CD4-positive, alpha-beta memory T cell (primary cell): ENCODE measurements at regions of chr3 and their contacts with region 1.

Region 1: GRCh38 chr3:57755668-57756527 is at the start of gene SLMAP:
- DNase-seq: peak; percentile 94 to 98 (median 95)
- H3K4me3 ChIP-seq: peak within 1 kb of the TSS; percentile 40 to 81
- H3K4me3 Mint-ChIP-seq: peak within 1 kb of the TSS; percentile 96 to 99 (median 98)
- H3K27ac ChIP-seq: peak within 1 kb of the TSS; percentile 77
- H3K27ac Mint-ChIP-seq: peak within 1 kb of the TSS; percentile 86 to 98 (median 96)
- H3K4me1 ChIP-seq: peaks cover 39% of the 10 kb centered on the region
- H3K4me1 Mint-ChIP-seq: peaks cover 19 to 49% (median 35%) of the 10 kb centered on the region in 4 donors
- H3K27me3 ChIP-seq: no peaks in the 10 kb centered on the region
- H3K27me3 Mint-ChIP-seq: no peaks in the 10 kb centered on the region
- total RNA-seq, gene SLMAP: 58.6 to 69.0 TPM

Region 2: DNA sequence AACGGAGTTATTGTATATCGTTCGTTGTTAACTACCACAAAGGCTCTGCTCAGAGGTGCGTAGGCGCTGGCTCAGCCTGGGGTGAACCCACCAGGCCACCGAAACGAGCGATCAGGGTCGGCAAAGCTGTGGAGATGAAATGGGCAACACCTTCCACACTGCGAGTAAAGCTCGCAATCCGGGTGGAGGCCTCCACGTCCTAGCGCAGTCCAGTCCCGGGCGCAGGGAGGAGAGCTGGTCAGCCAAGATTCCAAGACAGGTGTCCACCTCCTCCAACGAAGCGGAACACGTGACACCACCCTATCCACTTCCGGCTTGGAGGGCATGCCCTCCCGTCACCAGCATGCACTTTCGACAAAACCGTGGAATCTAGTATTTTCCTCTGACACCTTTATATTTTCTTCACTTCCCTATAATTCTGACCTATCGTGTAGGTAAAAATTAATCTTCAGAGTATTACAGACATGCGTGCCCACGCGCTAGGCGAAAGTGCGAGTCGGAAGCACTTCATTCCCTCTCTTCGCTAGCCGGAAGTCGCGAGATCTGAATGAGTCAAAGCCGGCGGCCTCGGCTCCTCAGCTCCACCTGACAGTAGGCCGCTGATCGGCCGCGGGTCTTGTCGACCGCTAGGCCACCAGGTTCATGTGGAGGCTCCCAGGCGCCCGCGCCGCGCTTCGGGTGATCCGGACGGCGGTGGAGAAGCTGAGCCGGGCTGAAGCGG is 200.0 kb before region 1 on chr3 and contains the start of gene PDE12:
- CTCF ChIA-PET with region 1: interaction called, 3 read pairs
- POLR2A ChIA-PET with region 1: interaction called, 26 read pairs
- intact Hi-C with region 1: loop called (anchors 2 kb)
- DNase-seq: peak; percentile 82 to 87 (median 83)
- H3K4me3 ChIP-seq: peak within 1 kb of the TSS; percentile 85 to 89
- H3K4me3 Mint-ChIP-seq: peak within 1 kb of the TSS; percentile 92 to 100 (median 96)
- H3K27ac ChIP-seq: peak within 1 kb of the TSS; percentile 89
- H3K27ac Mint-ChIP-seq: peak within 1 kb of the TSS; percentile 97 to 100 (median 99)
- H3K4me1 ChIP-seq: peaks cover 43% of the 10 kb centered on the region
- H3K4me1 Mint-ChIP-seq: peaks cover 24 to 57% (median 36%) of the 10 kb centered on the region in 4 donors
- H3K27me3 ChIP-seq: no peaks in the 10 kb centered on the region
- H3K27me3 Mint-ChIP-seq: no peaks in the 10 kb centered on the region
- total RNA-seq, gene PDE12: 23.8 to 24.9 TPM

Region 3: DNA sequence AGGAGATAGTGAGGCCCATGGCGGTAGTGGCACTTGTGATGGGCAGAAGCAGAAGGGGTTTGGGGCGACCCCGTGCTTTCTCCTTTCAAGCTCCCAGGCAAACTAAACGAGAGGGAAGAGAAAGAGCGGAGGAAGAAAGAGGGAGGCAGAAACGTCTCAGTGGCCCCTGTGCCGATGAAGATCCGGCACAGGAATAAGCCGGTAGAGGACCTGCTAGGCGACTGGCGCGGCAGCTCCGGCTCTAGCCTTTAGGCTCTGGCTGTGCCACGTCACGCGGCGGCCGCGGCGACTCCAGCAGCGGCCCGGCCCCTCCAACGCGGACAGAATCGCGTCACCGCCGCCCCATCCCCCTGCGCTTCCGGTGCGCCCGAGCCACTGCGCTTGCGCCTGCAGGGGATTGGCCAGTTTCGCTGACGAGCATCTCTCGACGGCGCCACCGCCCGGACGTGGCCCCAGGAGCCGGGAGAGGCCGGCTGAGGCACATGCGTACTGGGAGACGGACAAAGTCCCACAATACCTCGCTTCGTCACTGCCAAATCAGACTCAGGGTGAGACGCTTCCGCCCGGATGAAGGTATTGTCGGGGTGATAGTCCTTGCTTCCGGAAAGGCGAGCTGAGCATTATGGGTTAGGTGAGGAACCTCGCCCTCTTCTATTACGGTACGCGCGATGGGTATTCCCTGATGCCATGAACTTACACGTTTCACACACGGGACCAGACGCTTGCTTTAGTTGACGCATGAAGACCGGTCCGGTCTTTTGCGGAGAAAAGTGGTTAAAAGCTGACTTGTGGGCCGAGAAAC is 158.6 kb before region 1 on chr3 and contains the start of gene ARF4:
- CTCF ChIA-PET with region 1: interaction called, 3 read pairs
- POLR2A ChIA-PET with region 1: interaction called, 57 read pairs
- intact Hi-C with region 1: loop called (anchors 1 kb)
- DNase-seq: peak; percentile 100
- H3K4me3 ChIP-seq: peak within 1 kb of the TSS; percentile 72 to 95
- H3K4me3 Mint-ChIP-seq: peak within 1 kb of the TSS; percentile 85 to 99 (median 99)
- H3K27ac ChIP-seq: peak within 1 kb of the TSS; percentile 100
- H3K27ac Mint-ChIP-seq: peak within 1 kb of the TSS; percentile 99 to 100 (median 100)
- H3K4me1 ChIP-seq: peaks cover 62% of the 10 kb centered on the region
- H3K4me1 Mint-ChIP-seq: peaks cover 34 to 72% (median 48%) of the 10 kb centered on the region in 4 donors
- H3K27me3 ChIP-seq: no peaks in the 10 kb centered on the region
- H3K27me3 Mint-ChIP-seq: no peaks in the 10 kb centered on the region
- total RNA-seq, gene ARF4: 55.8 to 58.5 TPM

Region 4: GRCh38 chr3:57692259-57693147 is 63.4 kb before region 1 on chr3 and contains the start of gene DENND6A:
- CTCF ChIA-PET with region 1: interaction called, 3 read pairs
- POLR2A ChIA-PET with region 1: interaction called, 38 read pairs
- intact Hi-C with region 1: loop called (anchors 1 kb)
- DNase-seq: peak; percentile 87 to 96 (median 95)
- H3K4me3 ChIP-seq: peak within 1 kb of the TSS; percentile 15 to 95
- H3K4me3 Mint-ChIP-seq: peak within 1 kb of the TSS; percentile 82 to 97 (median 92)
- H3K27ac ChIP-seq: peak within 1 kb of the TSS; percentile 84
- H3K27ac Mint-ChIP-seq: peak within 1 kb of the TSS; percentile 79 to 97 (median 94)
- H3K4me1 ChIP-seq: peaks cover 49% of the 10 kb centered on the region
- H3K4me1 Mint-ChIP-seq: peaks cover 16 to 45% (median 32%) of the 10 kb centered on the region in 4 donors
- H3K27me3 ChIP-seq: no peaks in the 10 kb centered on the region
- H3K27me3 Mint-ChIP-seq: no peaks in the 10 kb centered on the region
- total RNA-seq, gene DENND6A: 40.1 to 43.7 TPM

Region 5: DNA sequence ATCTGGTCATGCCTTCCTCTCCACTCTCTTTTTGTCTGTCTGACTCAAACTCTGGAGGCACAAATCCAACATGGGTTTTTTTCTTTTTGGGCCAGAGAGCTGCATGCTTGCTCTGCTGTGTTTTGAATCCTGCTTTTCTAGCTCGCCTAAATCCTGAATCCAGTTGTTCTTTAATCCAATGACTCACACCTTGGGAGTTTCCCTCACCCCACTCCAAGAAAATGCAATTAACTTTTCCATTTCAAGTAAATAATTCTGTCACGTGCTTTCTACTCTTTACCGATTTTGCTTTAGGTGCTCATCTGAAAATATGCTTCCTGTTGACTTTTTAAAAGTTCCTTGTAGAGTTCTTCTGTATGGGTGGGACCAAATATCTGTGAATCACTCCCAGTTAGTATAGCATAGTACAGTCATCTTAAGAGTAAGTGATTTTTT is 47.8 kb after region 1 on chr3:
- CTCF ChIA-PET with region 1: no interaction called
- POLR2A ChIA-PET with region 1: interaction called, 6 read pairs
- intact Hi-C with region 1: loop called (anchors 5 kb)
- DNase-seq: peak in 2 of 5 donors; percentile 9 to 15
- H3K4me3 ChIP-seq: peak overlapping the region in 1 of 2 donors; percentile 25
- H3K4me3 Mint-ChIP-seq: peak overlapping the region; percentile 52 to 88 (median 74)
- H3K27ac ChIP-seq: peak overlapping the region; percentile 13
- H3K27ac Mint-ChIP-seq: peak overlapping the region; percentile 26 to 93 (median 81)
- H3K4me1 ChIP-seq: peaks cover 48% of the 10 kb centered on the region
- H3K4me1 Mint-ChIP-seq: peaks cover 52 to 72% (median 65%) of the 10 kb centered on the region in 4 donors
- H3K27me3 ChIP-seq: no peaks in the 10 kb centered on the region
- H3K27me3 Mint-ChIP-seq: no peaks in the 10 kb centered on the region

Region 6: DNA sequence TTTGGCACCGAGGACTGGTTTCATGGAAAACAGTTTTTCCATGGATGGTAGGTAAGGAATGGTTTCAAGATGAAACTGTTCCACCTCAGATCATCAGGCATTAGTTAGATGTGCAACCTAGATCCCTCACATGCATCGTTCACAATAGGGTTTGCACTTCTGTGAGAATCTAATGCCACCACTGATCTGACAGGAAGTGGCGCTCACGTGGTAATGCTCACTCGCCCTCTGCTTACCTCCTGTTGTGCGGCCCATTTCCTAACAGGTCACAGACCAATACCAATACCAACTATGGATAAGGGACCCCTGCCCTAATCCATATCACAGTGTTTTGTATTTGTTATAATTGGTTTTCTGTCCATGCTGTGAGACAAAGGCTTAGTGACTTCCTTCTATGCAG is 59.1 kb after region 1 on chr3:
- CTCF ChIA-PET with region 1: no interaction called
- POLR2A ChIA-PET with region 1: interaction called, 5 read pairs
- intact Hi-C with region 1: loop called (anchors 1 kb)
- DNase-seq: peak in 4 of 5 donors; percentile 28 to 44 (median 34)
- H3K4me3 ChIP-seq: peak overlapping the region in 1 of 2 donors; percentile 5
- H3K4me3 Mint-ChIP-seq: peak overlapping the region in 7 of 8 donors; percentile 5 to 79 (median 72)
- H3K27ac ChIP-seq: peak overlapping the region; percentile 3
- H3K27ac Mint-ChIP-seq: peak overlapping the region; percentile 14 to 82 (median 42)
- H3K4me1 ChIP-seq: peaks cover 20% of the 10 kb centered on the region
- H3K4me1 Mint-ChIP-seq: peaks cover 28 to 40% (median 33%) of the 10 kb centered on the region in 4 donors
- H3K27me3 ChIP-seq: no peaks in the 10 kb centered on the region
- H3K27me3 Mint-ChIP-seq: no peaks in the 10 kb centered on the region

Region 7: GRCh38 chr3:58059349-58060321 is 303.7 kb after region 1 on chr3:
- CTCF ChIA-PET with region 1: no interaction called
- POLR2A ChIA-PET with region 1: no interaction called
- intact Hi-C with region 1: no loop called
- DNase-seq: no peak
- H3K4me3 ChIP-seq: no peak overlapping the region
- H3K4me3 Mint-ChIP-seq: no peak overlapping the region
- H3K27ac ChIP-seq: no peak overlapping the region
- H3K27ac Mint-ChIP-seq: no peak overlapping the region
- H3K4me1 ChIP-seq: peaks cover 6% of the 10 kb centered on the region
- H3K4me1 Mint-ChIP-seq: peaks cover 3 to 13% (median 5%) of the 10 kb centered on the region in 4 donors
- H3K27me3 ChIP-seq: no peaks in the 10 kb centered on the region
- H3K27me3 Mint-ChIP-seq: no peaks in the 10 kb centered on the region